Dendritic cell treated with granulocyte-macrophage colony-stimulating factor and Interleukin-4, amounts not matched to agents 40 ng/mL and 50 ng/mL, for 4 days (primary cell): ENCODE measurements at regions of chr1 and their contacts with region 1.

Region 1: GRCh38 chr1:31789259-31790065 is 25.3 kb upstream of the ADGRB2 start:
- H3K4me3 Mint-ChIP-seq: peak overlapping the region; percentile 77
- H3K27ac Mint-ChIP-seq: peak overlapping the region; percentile 92
- H3K4me1 Mint-ChIP-seq: peaks cover 19% of the 10 kb centered on the region
- H3K27me3 Mint-ChIP-seq: peaks cover 20% of the 10 kb centered on the region

Region 2: GRCh38 chr1:31663622-31664452 is 125.6 kb before region 1 on chr1:
- intact Hi-C with region 1: loop called (anchors 1 kb)
- H3K4me3 Mint-ChIP-seq: no peak overlapping the region
- H3K27ac Mint-ChIP-seq: no peak overlapping the region
- H3K4me1 Mint-ChIP-seq: peaks cover 5% of the 10 kb centered on the region
- H3K27me3 Mint-ChIP-seq: peaks cover 24% of the 10 kb centered on the region

Region 3: DNA sequence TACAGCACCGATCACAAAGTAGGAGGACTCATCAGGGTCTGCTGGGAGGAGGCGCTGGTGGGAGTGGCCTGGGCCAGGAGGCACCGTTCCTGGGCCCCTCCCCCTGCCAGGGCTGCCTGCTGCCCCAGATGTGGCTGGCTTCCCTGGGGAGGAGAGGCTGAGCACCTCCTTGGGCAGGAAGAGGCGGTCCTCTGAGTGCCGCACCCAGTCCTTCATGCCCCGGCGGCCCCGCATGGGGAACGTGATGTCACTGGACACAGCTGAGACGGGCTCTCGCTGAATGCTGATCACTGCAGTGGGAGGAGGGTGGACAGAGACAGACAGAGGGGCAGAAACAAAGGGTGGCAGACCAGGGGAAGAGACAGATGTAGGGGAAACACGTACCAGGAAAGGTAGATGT is 50.1 kb before region 1 on chr1:
- intact Hi-C with region 1: no loop called
- H3K4me3 Mint-ChIP-seq: no peak overlapping the region
- H3K27ac Mint-ChIP-seq: no peak overlapping the region
- H3K4me1 Mint-ChIP-seq: peaks cover 5% of the 10 kb centered on the region
- H3K27me3 Mint-ChIP-seq: peaks cover 18% of the 10 kb centered on the region

Region 4: GRCh38 chr1:31765041-31765467 is 24.4 kb before region 1 on chr1:
- intact Hi-C with region 1: loop called (anchors 2 kb)
- H3K4me3 Mint-ChIP-seq: no peak overlapping the region
- H3K27ac Mint-ChIP-seq: no peak overlapping the region
- H3K4me1 Mint-ChIP-seq: peaks cover 31% of the 10 kb centered on the region
- H3K27me3 Mint-ChIP-seq: peaks cover 88% of the 10 kb centered on the region

Region 5: DNA sequence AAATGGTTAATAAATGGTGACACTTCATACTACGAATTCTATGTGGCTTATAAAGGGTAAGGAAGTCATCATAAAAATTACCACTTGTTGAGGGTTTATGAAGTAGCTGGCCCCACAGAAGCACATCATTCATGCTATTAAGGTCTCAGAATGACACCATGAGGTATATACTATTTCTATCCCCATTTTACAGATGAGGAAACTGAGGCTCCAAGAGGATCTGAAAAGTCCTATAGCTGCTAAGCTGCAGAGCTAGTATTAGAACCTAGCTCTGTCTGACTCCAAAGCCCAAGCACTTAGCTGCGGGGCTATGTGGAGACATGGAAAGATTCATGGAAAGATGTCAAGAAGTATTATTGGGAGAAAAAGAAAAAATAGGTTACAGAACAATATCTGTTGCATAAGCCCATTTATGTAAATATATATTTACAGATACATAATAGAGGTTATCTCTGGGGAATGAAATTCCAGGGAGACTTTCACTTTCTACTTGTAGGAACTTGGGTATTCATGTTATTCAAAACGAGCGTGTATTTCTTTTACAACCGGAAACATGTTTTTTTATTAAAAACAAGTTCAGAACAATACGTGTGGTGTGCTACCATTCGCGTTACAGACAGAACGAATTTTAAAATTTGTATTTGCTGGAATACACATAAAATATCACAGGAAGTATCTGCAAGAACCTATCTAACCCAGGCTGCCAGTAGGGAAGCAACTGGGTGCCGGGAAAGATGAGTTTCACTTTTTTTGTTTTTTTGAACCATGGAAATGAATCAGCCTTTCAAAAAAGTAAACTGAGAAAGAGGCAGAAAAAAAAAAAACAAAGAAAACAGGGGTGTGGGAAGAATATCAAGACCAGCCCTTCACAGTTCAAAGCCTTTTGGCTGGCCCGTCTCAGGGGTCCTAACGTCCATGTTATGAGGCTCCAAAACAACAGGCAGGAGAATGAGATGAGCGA is 13.0 kb after region 1 on chr1:
- intact Hi-C with region 1: no loop called
- H3K4me3 Mint-ChIP-seq: no peak overlapping the region
- H3K27ac Mint-ChIP-seq: no peak overlapping the region
- H3K4me1 Mint-ChIP-seq: peaks cover 38% of the 10 kb centered on the region
- H3K27me3 Mint-ChIP-seq: peaks cover 55% of the 10 kb centered on the region